Posterior vena cava (tissue), 2 donors: ENCODE measurements at regions of chr19 and their contacts with region 1.

Region 1: DNA sequence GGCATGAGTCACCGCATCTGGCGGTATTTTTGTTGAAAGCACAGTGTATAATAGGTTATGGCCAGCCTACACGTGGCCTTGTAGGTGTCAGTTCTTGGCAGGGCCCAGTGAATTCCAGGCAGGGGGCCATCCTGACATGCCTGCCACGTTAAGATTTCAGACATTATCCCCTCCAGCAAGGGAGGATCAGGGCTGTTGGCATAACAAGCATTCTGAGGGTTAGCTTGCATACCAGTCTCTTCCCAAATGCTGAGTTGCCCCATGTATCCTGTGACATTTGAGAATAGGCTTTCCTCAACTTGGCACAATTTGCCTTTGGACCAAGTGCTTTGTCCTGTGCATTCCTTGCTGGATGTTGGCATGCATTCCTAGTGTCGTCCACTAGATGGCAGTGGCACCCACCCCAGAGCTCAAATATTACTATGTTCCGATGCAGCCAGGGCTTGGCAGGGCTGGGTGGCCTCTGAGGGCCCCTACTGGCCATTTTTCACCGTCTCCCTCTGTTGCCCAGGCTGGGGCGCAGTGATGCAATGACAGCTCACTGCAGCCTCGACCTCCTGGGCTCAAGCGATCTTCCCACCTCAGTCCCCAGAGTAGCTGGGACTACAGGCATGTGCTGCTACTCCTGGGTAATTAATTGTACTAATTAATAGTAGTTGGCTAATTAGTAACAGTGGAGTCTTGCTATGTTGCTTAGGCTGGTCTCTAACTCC is 31.2 kb downstream of the NLRP12 start:
- DNase-seq: peak; percentile 96

Region 2: GRCh38 chr19:53824134-53824611 is 31.3 kb after region 1 on chr19 and contains the start of gene NLRP12:
- intact Hi-C with region 1: no loop called
- DNase-seq: no peak
- total RNA-seq, gene NLRP12: 1.8 to 2.0 TPM

Region 3: DNA sequence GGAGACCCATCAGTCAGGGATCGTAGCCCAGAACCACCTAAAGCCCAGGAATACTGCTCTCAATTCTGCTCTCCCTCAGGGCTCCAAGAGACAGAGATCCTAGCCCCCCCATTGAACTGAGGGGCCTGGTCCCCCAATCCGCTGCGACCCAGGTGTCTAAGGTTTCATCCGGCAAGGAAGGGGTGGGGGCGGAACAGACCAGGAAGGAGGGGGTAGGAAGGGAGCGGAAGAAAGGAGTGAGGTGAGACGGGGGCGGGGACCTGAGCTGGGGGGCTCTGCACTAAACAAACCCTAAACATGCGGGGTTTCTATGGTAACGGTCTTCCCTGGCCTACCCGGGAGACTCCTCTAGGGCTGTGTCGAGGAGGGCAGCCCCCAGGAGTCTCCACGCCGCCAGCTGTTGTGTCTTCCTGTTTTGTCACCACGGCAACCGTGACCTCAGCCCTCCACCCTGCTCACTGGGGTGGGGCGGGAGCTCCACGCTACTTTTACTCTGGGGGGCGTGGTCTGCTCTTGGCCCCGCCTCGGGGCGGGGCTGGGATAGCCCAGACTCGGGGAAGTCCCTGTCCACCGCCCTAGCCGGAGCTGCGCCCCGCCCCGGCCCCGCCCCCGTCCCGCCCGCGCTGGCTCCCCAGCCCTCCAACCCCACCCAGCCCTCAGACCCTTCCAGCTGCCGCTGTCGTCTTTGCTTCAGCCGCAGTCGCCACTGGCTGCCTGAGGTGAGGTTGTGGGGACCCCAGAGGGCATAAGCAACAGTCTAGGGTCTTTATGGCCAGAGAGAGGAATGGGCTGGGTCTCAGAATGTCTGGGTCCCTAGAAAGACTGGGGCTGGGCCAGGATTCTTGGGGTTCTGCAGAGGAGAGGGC is 74.6 kb after region 1 on chr19 and contains the start of gene MYADM:
- intact Hi-C with region 1: no loop called
- DNase-seq: peak; percentile 100
- total RNA-seq, gene MYADM: 360 to 372 TPM

Region 4: GRCh38 chr19:54420383-54421168 is 627.7 kb after region 1 on chr19:
- intact Hi-C with region 1: loop called in 1 of 2 experiments (anchors 5 kb)
- DNase-seq: peak; percentile 76

Region 5: DNA sequence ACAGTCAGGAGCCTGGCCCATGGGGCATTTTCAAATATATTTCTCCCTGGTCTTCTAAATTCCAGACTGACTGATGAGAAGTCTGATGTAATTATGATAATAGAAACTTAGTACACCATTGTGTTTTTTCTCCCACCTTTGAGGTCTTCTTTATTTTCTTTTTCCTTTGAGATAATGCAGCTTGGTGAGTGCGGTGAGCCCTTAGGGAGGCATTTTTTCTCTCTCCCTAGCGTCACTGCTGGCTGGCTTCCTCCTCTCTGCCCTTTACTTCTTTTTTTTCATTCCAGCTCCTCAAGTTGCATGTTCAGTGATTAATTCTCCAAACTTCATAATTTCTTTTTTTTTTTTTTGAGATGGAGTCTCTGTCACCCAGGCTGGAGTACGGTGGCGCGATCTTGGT is 693.0 kb after region 1 on chr19:
- intact Hi-C with region 1: no loop called
- DNase-seq: peak; percentile 23